Activated CD4-positive, alpha-beta T cell treated with anti-CD3 and anti-CD28 coated beads for 36 hours (primary cell): ENCODE measurements at regions of chr5 and their contacts with region 1.

Region 1: DNA sequence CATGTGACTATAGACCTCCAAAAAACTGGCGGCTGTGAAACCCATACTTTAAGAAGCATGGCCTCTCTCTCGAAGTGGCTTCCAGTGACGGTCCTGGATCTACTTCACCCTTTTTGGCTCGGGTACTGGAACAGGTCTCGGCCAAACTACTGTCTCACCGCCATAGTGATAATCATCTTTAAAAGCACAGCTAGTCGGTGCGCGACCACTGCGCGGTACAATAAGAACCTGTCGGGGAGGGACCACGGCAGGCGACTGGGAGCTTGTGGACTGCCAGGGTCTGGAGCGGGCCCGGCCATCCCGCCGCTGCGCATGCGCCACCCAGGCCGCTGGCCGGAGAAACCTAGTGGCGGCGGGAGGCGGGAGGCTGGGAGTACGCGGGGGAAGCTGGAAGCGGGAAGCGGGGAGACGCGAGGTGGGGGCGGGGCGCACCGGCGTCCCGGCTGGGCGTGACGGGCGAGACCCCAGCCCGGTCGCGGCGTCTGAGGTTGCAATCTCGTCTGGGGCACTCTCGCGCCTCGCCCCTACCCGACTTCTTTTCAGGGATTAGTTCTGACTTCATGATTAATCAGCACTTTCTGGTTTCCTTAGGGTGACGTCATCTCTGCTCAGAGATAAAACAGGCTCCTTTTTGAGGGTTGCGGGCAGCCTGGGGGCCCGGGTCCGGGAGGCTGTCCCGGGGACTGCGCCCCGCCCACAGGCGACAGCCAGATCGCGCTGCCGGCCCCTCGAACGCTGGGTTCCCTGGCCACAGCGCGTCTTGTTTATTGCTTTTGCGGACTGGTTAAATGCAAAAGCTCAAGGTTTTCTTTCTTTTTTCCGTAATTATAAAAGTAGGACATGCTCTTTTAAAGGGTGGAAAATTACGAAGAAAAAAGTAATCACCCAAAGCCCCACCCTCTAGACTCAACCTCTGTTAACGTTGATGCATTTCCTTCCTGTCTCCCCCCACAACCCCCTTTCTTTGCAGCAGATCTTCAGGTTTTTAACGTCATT is 266.8 kb downstream of the CWC27 start:
- DNase-seq: peak; percentile 83
- ATAC-seq: peak; percentile 94
- H3K4me3 Mint-ChIP-seq: peak overlapping the region; percentile 66
- H3K27ac Mint-ChIP-seq: peak overlapping the region; percentile 80
- H3K4me1 Mint-ChIP-seq: peaks cover 19% of the 10 kb centered on the region
- H3K27me3 Mint-ChIP-seq: no peaks in the 10 kb centered on the region

Region 2: DNA sequence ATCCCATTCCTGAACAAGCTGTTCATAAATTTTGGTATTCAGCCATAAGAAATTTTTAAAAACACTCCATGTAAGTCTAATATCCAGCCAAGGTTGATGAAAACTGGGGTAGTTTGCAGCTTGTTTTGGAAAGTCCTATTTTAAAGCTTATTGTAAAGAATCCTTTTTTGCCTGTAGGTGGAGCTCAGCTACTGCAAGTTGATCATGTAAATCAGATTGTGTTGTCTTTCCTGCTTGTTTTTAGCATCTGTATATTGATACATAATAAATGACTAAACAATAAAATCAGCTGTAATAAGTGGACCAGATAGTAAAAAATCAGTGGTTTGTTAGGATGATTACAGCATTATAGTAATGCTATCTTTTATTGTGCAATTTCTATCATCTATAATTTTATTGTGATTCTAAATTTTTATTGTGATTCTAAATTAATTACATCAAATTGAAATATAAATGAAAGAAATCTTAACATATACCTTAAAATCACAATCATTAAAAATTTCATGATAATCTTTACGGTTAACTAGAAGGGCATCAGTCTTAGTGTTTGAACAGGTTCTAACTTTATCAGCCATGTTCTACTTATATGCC is 224.4 kb before region 1 on chr5:
- CTCF ChIA-PET with region 1: no interaction called
- POLR2A ChIA-PET with region 1: interaction called, 3 read pairs
- intact Hi-C with region 1: loop called in 1 of 2 experiments (anchors 5 kb)
- DNase-seq: peak; percentile 7
- ATAC-seq: no peak
- H3K4me3 Mint-ChIP-seq: no peak overlapping the region
- H3K27ac Mint-ChIP-seq: no peak overlapping the region
- H3K4me1 Mint-ChIP-seq: peaks cover 6% of the 10 kb centered on the region
- H3K27me3 Mint-ChIP-seq: no peaks in the 10 kb centered on the region

Region 3: DNA sequence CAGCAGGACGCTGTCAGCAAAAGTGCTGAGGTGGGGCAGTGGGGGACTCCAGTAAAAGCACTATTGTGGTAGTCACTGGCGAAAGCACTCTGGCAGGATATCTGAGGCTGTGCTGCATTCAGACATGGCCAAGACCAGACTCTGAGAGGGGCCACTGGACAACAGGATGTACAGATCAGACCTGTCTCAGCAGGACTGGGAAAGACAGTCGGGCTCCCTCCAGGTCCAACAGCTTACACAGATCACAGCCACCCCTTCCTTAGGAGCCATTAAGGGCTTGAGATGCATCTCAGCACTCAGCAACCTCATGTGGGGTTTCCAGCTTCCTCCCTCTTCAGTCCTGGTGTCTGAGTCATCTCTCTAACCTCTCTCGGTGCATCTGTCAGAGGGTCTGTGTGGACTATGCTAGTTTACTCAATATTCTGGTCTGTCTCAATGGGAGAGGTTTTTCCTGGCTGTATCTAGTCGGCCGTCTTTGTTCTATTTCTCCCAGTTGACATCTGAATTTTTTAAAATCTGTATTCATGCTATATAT is 112.3 kb before region 1 on chr5:
- CTCF ChIA-PET with region 1: no interaction called
- POLR2A ChIA-PET with region 1: no interaction called
- intact Hi-C with region 1: no loop called
- DNase-seq: no peak
- ATAC-seq: no peak
- H3K4me3 Mint-ChIP-seq: no peak overlapping the region
- H3K27ac Mint-ChIP-seq: no peak overlapping the region
- H3K4me1 Mint-ChIP-seq: peaks cover 9% of the 10 kb centered on the region
- H3K27me3 Mint-ChIP-seq: no peaks in the 10 kb centered on the region

Region 4: GRCh38 chr5:65076251-65076869 is 40.9 kb after region 1 on chr5:
- CTCF ChIA-PET with region 1: interaction called, 3 read pairs
- POLR2A ChIA-PET with region 1: no interaction called
- intact Hi-C with region 1: loop called in 1 of 2 experiments (anchors 2 kb)
- DNase-seq: peak; percentile 74
- ATAC-seq: peak; percentile 99
- H3K4me3 Mint-ChIP-seq: no peak overlapping the region
- H3K27ac Mint-ChIP-seq: no peak overlapping the region
- H3K4me1 Mint-ChIP-seq: peaks cover 11% of the 10 kb centered on the region
- H3K27me3 Mint-ChIP-seq: peaks cover 8% of the 10 kb centered on the region

Region 5: DNA sequence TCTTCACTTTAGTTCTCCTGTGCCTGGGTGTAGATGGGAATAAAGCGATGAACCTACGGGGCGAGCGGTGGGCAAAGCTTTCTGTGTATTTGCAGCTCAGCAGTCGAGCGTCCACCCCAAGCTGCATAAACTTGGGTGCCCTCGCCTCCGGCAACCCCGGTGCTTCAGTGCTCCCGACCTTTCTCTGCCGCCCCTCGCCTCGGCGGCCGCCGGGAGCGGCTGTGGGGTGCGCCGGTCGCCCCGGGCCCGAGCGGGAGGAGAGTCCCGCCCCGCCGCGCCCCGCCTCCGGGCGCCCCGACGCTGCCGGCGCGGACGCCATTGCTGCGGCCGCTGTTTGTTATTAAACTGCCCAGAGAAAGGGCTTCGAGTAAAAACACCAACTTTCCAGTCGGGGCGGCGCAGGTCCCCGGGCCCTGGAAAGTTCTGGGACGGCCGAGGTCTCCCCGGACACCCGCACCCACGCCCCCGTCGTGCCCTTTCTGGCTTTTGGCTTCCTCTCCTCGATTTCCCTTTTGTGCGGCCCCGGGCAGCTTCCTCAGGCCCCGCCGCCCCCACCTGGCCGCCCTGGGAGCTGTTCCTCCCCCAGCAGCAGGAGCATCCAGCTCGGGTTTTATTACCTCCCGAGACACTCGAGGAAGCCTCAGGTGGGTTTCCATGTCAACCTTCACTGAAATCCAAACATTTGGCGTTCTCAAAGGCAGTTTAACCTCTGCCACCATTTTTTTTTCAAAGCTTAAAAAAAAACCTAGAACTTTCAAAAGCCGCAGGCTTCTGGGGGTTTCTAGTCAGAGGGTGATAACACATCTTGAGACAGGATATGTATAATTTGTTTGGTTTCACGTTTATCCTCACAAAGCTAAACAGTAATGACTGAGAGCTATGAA is 67.6 kb after region 1 on chr5:
- CTCF ChIA-PET with region 1: interaction called, 3 read pairs
- POLR2A ChIA-PET with region 1: no interaction called
- intact Hi-C with region 1: loop called in 1 of 2 experiments (anchors 2 kb)
- DNase-seq: peak; percentile 52
- ATAC-seq: peak; percentile 84
- H3K4me3 Mint-ChIP-seq: peak overlapping the region; percentile 66
- H3K27ac Mint-ChIP-seq: peak overlapping the region; percentile 72
- H3K4me1 Mint-ChIP-seq: peaks cover 30% of the 10 kb centered on the region
- H3K27me3 Mint-ChIP-seq: peaks cover 9% of the 10 kb centered on the region

Region 6: GRCh38 chr5:65190328-65191053 is 155.0 kb after region 1 on chr5:
- CTCF ChIA-PET with region 1: no interaction called
- POLR2A ChIA-PET with region 1: no interaction called
- intact Hi-C with region 1: loop called in 1 of 2 experiments (anchors 5 kb)
- DNase-seq: peak; percentile 28
- ATAC-seq: peak; percentile 92
- H3K4me3 Mint-ChIP-seq: no peak overlapping the region
- H3K27ac Mint-ChIP-seq: peak overlapping the region; percentile 52
- H3K4me1 Mint-ChIP-seq: peaks cover 21% of the 10 kb centered on the region
- H3K27me3 Mint-ChIP-seq: peaks cover 8% of the 10 kb centered on the region